Activated CD4-positive, alpha-beta memory T cell treated with anti-CD3 and anti-CD28 coated beads, Interleukin-2, amount 10 ng/mL, durations not matched to agents 7 days and 5 days (primary cell): ENCODE measurements at regions of chr1 and their contacts with region 1.

Region 1: GRCh38 chr1:11907275-11908094 is 18.7 kb downstream of the KIAA2013 start:
- DNase-seq: peak; percentile 93
- H3K4me3 Mint-ChIP-seq: peak overlapping the region; percentile 81
- H3K27ac Mint-ChIP-seq: peak overlapping the region; percentile 98
- H3K4me1 Mint-ChIP-seq: peaks cover 46% of the 10 kb centered on the region
- H3K27me3 Mint-ChIP-seq: peaks cover 16% of the 10 kb centered on the region

Region 2: GRCh38 chr1:11099310-11100149 is 808.0 kb before region 1 on chr1 and contains the start of gene EXOSC10:
- CTCF ChIA-PET with region 1: no interaction called
- POLR2A ChIA-PET with region 1: interaction called, 10 read pairs
- DNase-seq: peak; percentile 96
- H3K4me3 Mint-ChIP-seq: peak within 1 kb of the TSS; percentile 92
- H3K27ac Mint-ChIP-seq: peak within 1 kb of the TSS; percentile 91
- H3K4me1 Mint-ChIP-seq: peaks cover 24% of the 10 kb centered on the region
- H3K27me3 Mint-ChIP-seq: no peaks in the 10 kb centered on the region
- total RNA-seq, gene EXOSC10: 65.8 to 67.6 TPM

Region 3: DNA sequence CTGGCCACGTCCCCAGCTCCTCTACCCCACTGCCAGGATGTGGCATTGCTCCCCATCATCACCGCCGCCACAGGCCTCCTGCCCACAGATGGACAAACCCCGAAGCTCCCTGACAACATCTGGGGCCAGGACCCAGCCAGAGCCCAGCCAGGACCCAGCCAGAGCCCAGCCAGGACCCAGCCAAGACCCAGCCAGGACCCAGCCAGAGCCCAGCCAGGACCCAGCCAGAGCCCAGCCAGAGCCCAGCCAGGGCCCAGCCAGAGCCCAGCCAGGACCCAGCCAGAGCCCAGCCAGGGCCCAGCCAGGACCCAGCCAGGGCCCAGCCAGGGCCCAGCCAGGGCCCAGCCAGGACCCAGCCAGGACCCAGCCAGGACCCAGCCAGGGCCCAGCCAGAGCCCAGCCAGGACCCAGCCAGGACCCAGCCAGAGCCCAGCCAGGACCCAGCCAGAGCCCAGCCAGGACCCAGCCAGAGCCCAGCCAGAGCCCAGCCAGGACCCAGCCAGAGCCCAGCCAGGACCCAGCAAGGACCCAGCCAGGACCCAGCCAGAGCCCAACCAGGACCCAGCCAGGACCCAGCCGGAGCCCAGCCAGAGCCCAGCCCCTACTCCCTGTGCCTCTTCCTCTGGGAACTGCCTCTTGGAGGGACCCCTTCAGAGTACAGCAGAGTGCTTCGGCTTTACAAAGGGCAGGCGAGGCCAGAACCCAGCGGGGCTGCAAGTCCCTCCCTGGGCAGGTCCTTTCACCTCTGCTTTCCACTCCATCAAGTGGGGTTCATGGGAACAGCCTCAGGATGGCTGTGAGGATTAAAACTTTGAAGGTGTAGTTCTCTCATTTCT is 384.9 kb before region 1 on chr1:
- CTCF ChIA-PET with region 1: no interaction called
- POLR2A ChIA-PET with region 1: no interaction called
- DNase-seq: no peak
- H3K4me3 Mint-ChIP-seq: no peak overlapping the region
- H3K27ac Mint-ChIP-seq: no peak overlapping the region
- H3K4me1 Mint-ChIP-seq: no peaks in the 10 kb centered on the region
- H3K27me3 Mint-ChIP-seq: no peaks in the 10 kb centered on the region

Region 4: DNA sequence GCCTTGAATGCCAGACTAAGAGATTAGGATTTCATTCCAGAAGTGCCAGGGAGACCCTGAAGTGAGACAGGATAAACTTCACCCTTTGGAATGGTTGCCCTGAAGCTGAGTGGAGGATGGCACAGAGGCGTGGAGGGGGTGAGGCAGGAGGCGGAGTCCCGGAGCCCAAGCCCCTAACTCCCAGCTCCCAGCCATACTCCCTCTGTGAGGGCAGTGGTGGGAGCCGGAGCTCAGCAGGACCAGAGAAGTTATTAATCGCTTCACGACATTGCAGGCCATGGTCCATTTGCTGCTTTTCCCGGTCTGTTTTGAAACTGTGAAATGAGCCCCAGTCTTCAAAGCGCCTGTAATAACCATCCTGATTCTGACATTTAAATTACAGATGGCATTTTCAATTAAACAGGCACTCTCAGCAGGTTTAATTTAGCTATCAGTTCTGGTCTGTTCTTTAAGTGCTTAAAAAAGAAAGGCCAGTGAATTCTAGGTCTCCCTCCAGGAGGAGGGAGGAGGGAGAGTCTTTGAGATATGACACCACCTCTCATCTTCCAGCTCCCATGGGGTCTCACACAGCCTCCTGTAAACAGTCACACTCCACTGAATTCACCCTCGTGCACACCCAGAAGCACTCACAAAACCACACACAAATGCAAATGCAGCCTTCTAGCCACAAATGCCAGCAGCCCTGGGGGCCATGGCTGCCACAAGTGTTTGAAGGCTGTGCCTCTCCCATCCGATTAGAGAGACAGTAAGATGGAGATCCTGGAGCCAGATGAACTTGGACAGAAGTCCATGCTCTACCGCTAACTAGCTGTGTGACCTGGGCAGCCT is 272.9 kb before region 1 on chr1:
- CTCF ChIA-PET with region 1: no interaction called
- POLR2A ChIA-PET with region 1: no interaction called
- DNase-seq: no peak
- H3K4me3 Mint-ChIP-seq: no peak overlapping the region
- H3K27ac Mint-ChIP-seq: no peak overlapping the region
- H3K4me1 Mint-ChIP-seq: no peaks in the 10 kb centered on the region
- H3K27me3 Mint-ChIP-seq: peaks cover 15% of the 10 kb centered on the region

Region 5: GRCh38 chr1:11823366-11824137 is 83.9 kb before region 1 on chr1:
- CTCF ChIA-PET with region 1: no interaction called
- POLR2A ChIA-PET with region 1: interaction called, 10 read pairs
- DNase-seq: no peak
- H3K4me3 Mint-ChIP-seq: no peak overlapping the region
- H3K27ac Mint-ChIP-seq: no peak overlapping the region
- H3K4me1 Mint-ChIP-seq: no peaks in the 10 kb centered on the region
- H3K27me3 Mint-ChIP-seq: no peaks in the 10 kb centered on the region

Region 6: DNA sequence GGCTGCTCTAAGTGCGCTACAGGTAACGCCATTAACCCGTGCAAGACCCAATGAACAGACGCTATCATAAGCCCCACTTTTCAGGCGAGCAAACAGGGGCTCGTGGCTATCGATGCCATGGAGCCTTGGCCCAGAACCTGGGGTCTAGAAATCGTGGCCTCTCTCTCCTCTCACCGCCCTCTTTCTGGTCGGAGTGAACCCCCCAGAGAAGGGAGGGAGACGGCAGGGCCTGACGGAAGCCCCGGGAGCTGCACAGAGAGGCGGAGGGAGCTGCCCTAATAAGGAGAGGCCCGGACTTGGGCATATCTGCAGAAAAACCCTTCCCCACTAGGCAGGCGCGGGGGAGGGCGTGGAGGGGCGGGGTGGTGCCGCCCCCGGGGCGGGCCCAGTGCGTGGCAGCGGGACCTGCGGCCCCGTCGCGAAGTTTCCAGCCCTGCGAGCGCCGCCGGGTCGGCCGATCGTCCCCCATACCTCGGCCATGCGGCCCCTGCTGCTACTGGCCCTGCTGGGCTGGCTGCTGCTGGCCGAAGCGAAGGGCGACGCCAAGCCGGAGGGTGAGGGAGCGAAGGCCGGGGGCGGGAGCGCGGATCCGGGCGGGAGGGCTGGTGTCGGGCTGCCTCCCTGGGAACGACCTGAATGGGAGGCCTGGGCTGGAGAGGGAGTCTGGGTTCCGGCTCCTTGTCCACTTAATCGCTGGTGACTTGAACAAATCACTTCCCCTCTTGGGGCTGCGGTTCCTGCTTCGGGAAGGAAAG is 27.0 kb after region 1 on chr1 and contains the start of gene PLOD1:
- CTCF ChIA-PET with region 1: interaction called, 5 read pairs
- POLR2A ChIA-PET with region 1: interaction called, 121 read pairs
- DNase-seq: peak; percentile 91
- H3K4me3 Mint-ChIP-seq: peak within 1 kb of the TSS; percentile 80
- H3K27ac Mint-ChIP-seq: peak within 1 kb of the TSS; percentile 59
- H3K4me1 Mint-ChIP-seq: peaks cover 10% of the 10 kb centered on the region
- H3K27me3 Mint-ChIP-seq: no peaks in the 10 kb centered on the region
- total RNA-seq, gene PLOD1: 15.7 to 16.5 TPM

Region 7: GRCh38 chr1:12019858-12020509 is 112.5 kb after region 1 on chr1:
- CTCF ChIA-PET with region 1: interaction called, 8 read pairs
- POLR2A ChIA-PET with region 1: interaction called, 124 read pairs
- DNase-seq: no peak
- H3K4me3 Mint-ChIP-seq: peak overlapping the region; percentile 78
- H3K27ac Mint-ChIP-seq: peak overlapping the region; percentile 82
- H3K4me1 Mint-ChIP-seq: peaks cover 49% of the 10 kb centered on the region
- H3K27me3 Mint-ChIP-seq: no peaks in the 10 kb centered on the region

Region 8: DNA sequence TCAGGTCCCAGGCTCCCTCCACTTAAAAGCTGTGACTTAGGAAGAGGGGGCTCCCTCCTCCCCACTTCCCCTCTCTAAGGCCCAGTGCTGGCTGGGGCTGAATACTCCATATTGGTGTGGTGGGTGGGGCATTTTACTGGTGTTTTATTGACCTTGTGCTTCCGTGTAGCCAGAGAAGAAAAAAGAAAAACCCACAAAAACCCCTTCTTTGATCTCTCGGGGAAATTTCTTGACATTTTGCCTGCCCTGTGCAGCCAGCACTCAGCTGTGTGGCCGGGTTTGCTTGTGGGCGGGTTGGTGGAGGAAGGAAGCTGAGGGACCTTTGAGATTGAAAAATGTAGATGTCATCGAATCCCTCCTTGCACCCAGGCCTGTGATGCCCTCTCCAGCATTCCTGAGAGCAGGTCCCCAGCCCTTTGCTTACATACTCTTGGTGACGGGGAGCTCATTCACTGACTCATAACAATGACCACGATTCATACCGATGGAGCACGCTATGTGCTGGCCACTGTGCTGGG is 180.4 kb after region 1 on chr1:
- CTCF ChIA-PET with region 1: interaction called, 3 read pairs
- POLR2A ChIA-PET with region 1: interaction called, 52 read pairs
- DNase-seq: peak; percentile 75
- H3K4me3 Mint-ChIP-seq: peak overlapping the region; percentile 43
- H3K27ac Mint-ChIP-seq: peak overlapping the region; percentile 91
- H3K4me1 Mint-ChIP-seq: peaks cover 64% of the 10 kb centered on the region
- H3K27me3 Mint-ChIP-seq: no peaks in the 10 kb centered on the region

Region 9: GRCh38 chr1:12244078-12244477 is 336.6 kb after region 1 on chr1:
- CTCF ChIA-PET with region 1: no interaction called
- POLR2A ChIA-PET with region 1: no interaction called
- DNase-seq: peak; percentile 18
- H3K4me3 Mint-ChIP-seq: no peak overlapping the region
- H3K27ac Mint-ChIP-seq: no peak overlapping the region
- H3K4me1 Mint-ChIP-seq: no peaks in the 10 kb centered on the region
- H3K27me3 Mint-ChIP-seq: no peaks in the 10 kb centered on the region

Region 10: GRCh38 chr1:12296623-12297022 is 389.1 kb after region 1 on chr1:
- CTCF ChIA-PET with region 1: no interaction called
- POLR2A ChIA-PET with region 1: interaction called, 10 read pairs
- DNase-seq: no peak
- H3K4me3 Mint-ChIP-seq: no peak overlapping the region
- H3K27ac Mint-ChIP-seq: peak overlapping the region; percentile 36
- H3K4me1 Mint-ChIP-seq: peaks cover 33% of the 10 kb centered on the region
- H3K27me3 Mint-ChIP-seq: no peaks in the 10 kb centered on the region